AG04450 (cell line): ENCODE measurements at regions of chr1 and their contacts with region 1.

Region 1: DNA sequence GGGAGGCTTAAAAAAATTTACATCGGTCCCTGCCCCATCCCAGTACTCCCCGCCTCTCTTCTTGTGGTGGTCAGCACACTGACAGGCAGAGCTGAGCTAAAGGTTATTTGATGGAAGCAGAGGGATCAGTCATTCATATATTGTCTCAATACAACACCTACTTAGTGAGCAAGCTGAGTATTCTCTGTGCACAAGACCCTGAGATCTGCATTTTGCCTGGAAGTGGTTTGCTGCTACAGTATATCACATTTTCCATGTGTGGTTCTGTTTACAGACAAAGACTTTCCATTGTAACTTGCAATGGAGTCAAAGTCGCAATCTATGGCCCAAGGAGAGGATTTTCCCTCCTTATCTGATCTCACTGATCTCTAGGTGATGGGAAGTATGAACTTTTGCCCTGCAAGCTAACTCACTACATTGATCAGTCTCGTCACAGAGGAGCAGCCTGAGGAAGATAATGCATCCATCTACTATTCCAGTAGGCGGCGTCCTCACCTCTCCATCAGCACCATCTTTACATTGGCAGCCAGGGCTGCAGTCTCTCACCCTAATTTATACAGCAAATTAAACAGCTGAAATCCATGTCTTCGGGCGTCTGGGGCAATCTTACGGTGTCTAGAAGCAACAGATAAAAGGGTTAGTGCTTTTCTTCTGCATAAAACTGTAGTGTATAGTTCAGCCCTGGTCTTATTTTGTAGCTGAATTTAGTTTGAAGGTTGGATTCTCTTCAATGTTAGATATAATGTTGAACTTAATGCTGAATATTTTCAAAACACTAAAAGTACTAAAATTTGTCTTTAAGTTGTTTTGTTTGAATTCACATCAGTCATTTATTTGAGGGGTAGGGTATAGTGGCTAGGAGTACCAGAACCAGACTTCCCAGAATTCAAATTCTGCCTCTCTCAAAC is 3.2 kb upstream of the TRAF5 start:
- DNase-seq: no peak
- H3K4me3 ChIP-seq: no peak overlapping the region
- H3K27ac ChIP-seq: no peak overlapping the region
- H3K27me3 ChIP-seq: no peaks in the 10 kb centered on the region
- CTCF ChIP-seq: peak; percentile 93

Region 2: GRCh38 chr1:211296396-211296795 is 27.0 kb before region 1 on chr1:
- CTCF ChIA-PET with region 1: interaction called, 10 read pairs
- POLR2A ChIA-PET with region 1: no interaction called
- DNase-seq: no peak
- H3K4me3 ChIP-seq: no peak overlapping the region
- H3K27ac ChIP-seq: no peak overlapping the region
- H3K27me3 ChIP-seq: no peaks in the 10 kb centered on the region
- CTCF ChIP-seq: no peak

Region 3: GRCh38 chr1:211356723-211357407 is 33.5 kb after region 1 on chr1:
- CTCF ChIA-PET with region 1: interaction called, 16 read pairs
- POLR2A ChIA-PET with region 1: interaction called, 3 read pairs
- DNase-seq: no peak
- H3K4me3 ChIP-seq: no peak overlapping the region
- H3K27ac ChIP-seq: peak overlapping the region; percentile 23
- H3K27me3 ChIP-seq: no peaks in the 10 kb centered on the region
- CTCF ChIP-seq: no peak

Region 4: DNA sequence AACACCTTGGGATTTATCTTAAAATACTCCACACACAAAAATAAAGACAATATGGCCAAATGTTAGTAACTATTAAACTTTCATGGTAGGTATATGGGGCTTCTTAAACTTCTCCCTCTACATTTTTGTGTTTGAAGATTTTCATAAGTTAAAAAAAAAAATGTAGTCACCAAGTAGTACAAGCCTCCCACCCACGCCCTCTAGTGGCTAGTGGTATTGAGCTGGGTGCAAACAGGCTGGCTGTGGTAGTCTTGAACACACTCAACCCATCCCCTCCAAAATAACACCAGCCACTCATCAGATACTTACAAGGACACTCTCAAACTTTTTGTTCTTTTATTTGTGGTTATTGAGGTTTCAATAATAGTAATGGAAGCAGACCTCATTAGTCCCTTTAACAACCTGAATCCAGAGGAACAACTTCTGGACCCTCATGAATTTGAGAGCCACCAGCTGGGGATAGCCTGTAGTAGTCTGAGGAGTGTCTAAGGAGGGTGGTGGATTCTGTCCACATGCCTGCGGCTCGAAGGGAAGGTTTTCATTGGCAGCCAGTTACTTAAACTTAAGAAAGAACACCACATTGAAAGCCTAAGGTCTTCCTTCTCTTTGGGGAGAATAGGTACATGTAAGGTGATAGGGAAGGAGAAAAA is 152.9 kb after region 1 on chr1:
- CTCF ChIA-PET with region 1: interaction called, 21 read pairs
- POLR2A ChIA-PET with region 1: interaction called, 4 read pairs
- DNase-seq: peak; percentile 38
- H3K4me3 ChIP-seq: no peak overlapping the region
- H3K27ac ChIP-seq: no peak overlapping the region
- H3K27me3 ChIP-seq: peaks cover 33% of the 10 kb centered on the region
- CTCF ChIP-seq: peak; percentile 92

Region 5: GRCh38 chr1:211643324-211644212 is 320.2 kb after region 1 on chr1:
- CTCF ChIA-PET with region 1: no interaction called
- POLR2A ChIA-PET with region 1: no interaction called
- DNase-seq: no peak
- H3K4me3 ChIP-seq: no peak overlapping the region
- H3K27ac ChIP-seq: no peak overlapping the region
- H3K27me3 ChIP-seq: no peaks in the 10 kb centered on the region
- CTCF ChIP-seq: no peak

Region 6: GRCh38 chr1:211654838-211655787 is 331.7 kb after region 1 on chr1:
- CTCF ChIA-PET with region 1: interaction called, 17 read pairs
- POLR2A ChIA-PET with region 1: interaction called, 3 read pairs
- DNase-seq: peak; percentile 74
- H3K4me3 ChIP-seq: no peak overlapping the region
- H3K27ac ChIP-seq: peak overlapping the region; percentile 11
- H3K27me3 ChIP-seq: no peaks in the 10 kb centered on the region
- CTCF ChIP-seq: peak; percentile 95